ENCODE measurements at regions of chr13 and their contacts with region 1.

Region 1: DNA sequence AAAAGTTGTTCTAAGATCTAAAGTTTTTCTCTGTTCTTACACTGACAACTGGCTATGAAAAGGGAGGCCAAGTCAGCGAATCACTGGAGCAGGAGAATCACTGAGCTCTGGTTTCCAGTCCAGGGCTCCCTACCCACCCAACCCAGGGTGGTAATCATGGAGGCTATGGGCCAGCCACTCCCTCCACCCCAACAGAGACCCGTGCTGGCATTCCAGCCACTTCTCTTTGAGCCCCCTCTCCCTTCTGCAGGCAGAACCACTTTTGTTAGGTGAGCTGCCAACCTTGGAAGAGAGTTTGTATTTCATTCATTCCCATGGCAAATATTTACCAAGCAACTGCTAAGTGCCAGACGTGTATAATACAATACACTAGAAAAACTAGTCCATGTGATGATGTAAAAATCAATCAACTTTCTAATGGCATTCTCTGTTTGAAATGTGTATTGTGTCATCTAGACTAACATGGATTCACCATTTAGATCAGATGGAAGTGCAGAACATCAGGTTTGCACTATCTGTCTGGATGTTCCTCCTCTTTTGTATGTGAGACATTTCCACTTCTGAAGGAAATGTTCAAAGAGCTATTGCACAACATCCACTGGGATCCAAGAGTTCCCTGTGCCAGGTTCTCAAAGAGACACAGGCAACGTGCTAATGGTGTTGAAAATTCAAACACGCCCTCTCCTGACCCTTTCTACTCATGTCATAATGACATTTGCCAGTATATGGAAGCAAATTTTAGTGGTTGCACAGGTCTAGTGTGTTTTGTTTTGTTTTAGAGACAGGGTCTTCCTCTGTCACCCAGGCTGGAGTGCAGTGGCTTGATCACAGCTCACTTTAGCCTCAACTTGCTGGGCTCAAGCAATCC is 5.3 kb downstream of the MLNR start:
- DNase-seq: no peak
- H3K4me3 ChIP-seq: no peak overlapping the region
- H3K4me3 Mint-ChIP-seq: no peak overlapping the region
- H3K27ac ChIP-seq: no peak overlapping the region
- H3K27ac Mint-ChIP-seq: no peak overlapping the region
- H3K4me1 ChIP-seq: peaks cover 5% of the 10 kb centered on the region
- H3K4me1 Mint-ChIP-seq: peaks cover 0 to 9% (median 5%) of the 10 kb centered on the region in 4 donors
- H3K27me3 ChIP-seq: peaks cover 7% of the 10 kb centered on the region
- H3K27me3 Mint-ChIP-seq: peaks cover 21 to 29% of the 10 kb centered on the region in 2 donors

Region 2: DNA sequence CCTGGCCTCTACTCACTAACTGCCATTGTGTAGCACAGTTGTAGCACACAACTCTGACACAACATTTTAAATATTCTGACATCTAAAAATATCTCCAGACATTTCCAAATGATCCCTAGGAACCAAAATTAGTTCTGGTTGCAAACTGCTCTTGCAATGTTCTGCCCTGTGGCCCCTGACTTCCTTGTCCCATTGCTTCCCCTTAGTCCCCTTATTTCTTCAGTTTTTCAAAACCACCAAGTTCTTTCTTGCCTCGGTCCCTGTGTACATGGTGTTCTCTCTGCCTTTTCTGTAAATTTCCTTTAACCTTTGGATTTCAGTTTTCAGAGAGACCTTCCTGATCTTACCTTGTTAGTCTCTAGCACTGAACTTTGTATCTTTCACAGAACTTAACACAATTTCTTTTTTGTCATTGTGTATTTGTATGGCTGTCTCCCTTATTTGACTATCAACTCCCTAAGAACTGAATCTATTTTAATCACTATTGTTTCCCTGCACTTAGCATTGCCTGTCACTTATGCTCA is 92.9 kb before region 1 on chr13:
- CTCF ChIA-PET with region 1: no interaction called
- POLR2A ChIA-PET with region 1: no interaction called
- intact Hi-C with region 1: no loop called
- DNase-seq: no peak
- H3K4me3 ChIP-seq: no peak overlapping the region
- H3K4me3 Mint-ChIP-seq: peak overlapping the region in 1 of 8 donors; percentile 23
- H3K27ac ChIP-seq: no peak overlapping the region
- H3K27ac Mint-ChIP-seq: peak overlapping the region in 3 of 7 donors; percentile 37 to 59 (median 45)
- H3K4me1 ChIP-seq: no peaks in the 10 kb centered on the region
- H3K4me1 Mint-ChIP-seq: peaks cover 12 to 21% (median 17%) of the 10 kb centered on the region in 4 donors
- H3K27me3 ChIP-seq: no peaks in the 10 kb centered on the region
- H3K27me3 Mint-ChIP-seq: no peaks in the 10 kb centered on the region

Region 3: DNA sequence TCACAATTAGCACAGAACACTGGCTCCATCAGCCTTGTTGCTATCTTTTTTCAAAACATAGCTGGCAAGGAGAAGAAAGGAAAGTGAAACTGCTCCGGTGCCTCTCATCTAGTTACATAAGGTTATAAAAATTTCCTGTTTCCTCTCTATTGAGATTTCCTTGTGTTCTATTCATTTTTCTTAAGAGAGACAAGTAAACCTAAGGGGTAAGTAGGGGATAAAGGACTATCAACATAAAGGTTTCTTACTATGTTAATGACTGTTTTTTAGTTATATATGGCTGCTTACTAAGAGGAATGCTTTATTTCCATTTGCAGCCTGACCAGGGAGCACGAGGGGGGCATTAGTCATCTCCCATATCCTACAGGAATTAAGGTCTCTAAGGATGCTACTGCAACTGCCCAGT is 78.5 kb before region 1 on chr13:
- CTCF ChIA-PET with region 1: no interaction called
- POLR2A ChIA-PET with region 1: no interaction called
- intact Hi-C with region 1: no loop called
- DNase-seq: peak; percentile 31 to 55 (median 45)
- H3K4me3 ChIP-seq: peak overlapping the region; percentile 13 to 30
- H3K4me3 Mint-ChIP-seq: peak overlapping the region; percentile 72 to 97 (median 88)
- H3K27ac ChIP-seq: peak overlapping the region; percentile 67
- H3K27ac Mint-ChIP-seq: peak overlapping the region; percentile 86 to 97 (median 94)
- H3K4me1 ChIP-seq: peaks cover 20% of the 10 kb centered on the region
- H3K4me1 Mint-ChIP-seq: peaks cover 30 to 67% (median 40%) of the 10 kb centered on the region in 4 donors
- H3K27me3 ChIP-seq: no peaks in the 10 kb centered on the region
- H3K27me3 Mint-ChIP-seq: no peaks in the 10 kb centered on the region

Region 4: GRCh38 chr13:49214917-49215376 is 10.5 kb before region 1 on chr13:
- CTCF ChIA-PET with region 1: interaction called, 10 read pairs
- POLR2A ChIA-PET with region 1: no interaction called
- intact Hi-C with region 1: no loop called
- DNase-seq: peak; percentile 26 to 48 (median 45)
- H3K4me3 ChIP-seq: no peak overlapping the region
- H3K4me3 Mint-ChIP-seq: peak overlapping the region in 3 of 8 donors; percentile 13 to 56 (median 47)
- H3K27ac ChIP-seq: no peak overlapping the region
- H3K27ac Mint-ChIP-seq: peak overlapping the region in 2 of 7 donors; percentile 68 to 76
- H3K4me1 ChIP-seq: peaks cover 16% of the 10 kb centered on the region
- H3K4me1 Mint-ChIP-seq: peaks cover 12 to 27% (median 15%) of the 10 kb centered on the region in 4 donors
- H3K27me3 ChIP-seq: peaks cover 18% of the 10 kb centered on the region
- H3K27me3 Mint-ChIP-seq: peaks cover 27 to 28% of the 10 kb centered on the region in 2 donors

Region 5: GRCh38 chr13:50116430-50116973 is 891.0 kb after region 1 on chr13:
- CTCF ChIA-PET with region 1: no interaction called
- POLR2A ChIA-PET with region 1: no interaction called
- intact Hi-C with region 1: no loop called
- DNase-seq: no peak
- H3K4me3 ChIP-seq: no peak overlapping the region
- H3K4me3 Mint-ChIP-seq: peak overlapping the region in 1 of 8 donors; percentile 2
- H3K27ac ChIP-seq: no peak overlapping the region
- H3K27ac Mint-ChIP-seq: peak overlapping the region in 1 of 7 donors; percentile 5
- H3K4me1 ChIP-seq: peaks cover 41% of the 10 kb centered on the region
- H3K4me1 Mint-ChIP-seq: peaks cover 17 to 24% (median 20%) of the 10 kb centered on the region in 4 donors
- H3K27me3 ChIP-seq: no peaks in the 10 kb centered on the region
- H3K27me3 Mint-ChIP-seq: no peaks in the 10 kb centered on the region

Measured in CD4-positive, alpha-beta memory T cell (primary cell).